Activated CD8-positive, alpha-beta T cell treated with anti-CD3 and anti-CD28 coated beads for 36 hours (primary cell): ENCODE measurements at regions of chr1 and their contacts with region 1.

Region 1: DNA sequence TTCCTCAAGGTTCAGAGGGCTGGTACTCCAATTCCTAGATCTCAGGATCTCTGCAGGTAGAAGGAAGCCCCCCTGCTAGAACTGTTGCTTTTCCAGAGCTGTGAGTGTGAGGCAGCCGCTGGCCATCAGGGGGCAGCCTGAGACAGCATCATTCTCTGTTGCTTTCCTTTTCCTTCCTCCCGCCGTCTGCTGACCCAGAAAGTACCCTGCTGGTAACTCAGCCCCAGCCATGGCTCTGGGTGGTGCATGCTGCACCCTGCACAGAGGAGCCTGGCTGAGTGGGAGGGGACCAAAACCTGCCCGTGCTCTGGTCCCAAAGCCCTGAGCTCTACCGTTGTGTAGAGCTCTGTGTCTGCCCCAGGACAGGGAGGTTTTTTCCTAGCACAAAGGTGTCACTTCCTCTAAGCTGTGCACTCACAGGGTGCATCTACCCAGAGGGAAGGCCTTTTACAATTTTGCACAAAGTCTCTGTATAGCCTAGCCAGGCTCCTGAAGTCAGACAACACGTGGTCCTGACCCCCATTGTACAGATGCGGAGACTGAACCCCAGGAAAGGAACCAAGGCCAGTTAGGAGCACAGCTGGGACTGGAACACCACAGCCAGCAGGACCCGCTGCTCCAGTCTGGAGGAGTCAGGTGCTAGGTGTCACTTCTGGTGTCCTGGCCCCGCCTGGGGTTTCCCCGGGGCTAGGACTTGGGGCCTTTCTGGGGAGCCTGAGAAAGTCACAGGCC is 5.6 kb upstream of the FAM131C start:
- DNase-seq: peak; percentile 89
- ATAC-seq: peak; percentile 90
- H3K4me3 Mint-ChIP-seq: peak overlapping the region; percentile 54
- H3K27ac Mint-ChIP-seq: peak overlapping the region; percentile 67
- H3K4me1 Mint-ChIP-seq: peaks cover 8% of the 10 kb centered on the region
- H3K27me3 Mint-ChIP-seq: peaks cover 5% of the 10 kb centered on the region
- CTCF ChIP-seq: peak; percentile 88

Region 2: DNA sequence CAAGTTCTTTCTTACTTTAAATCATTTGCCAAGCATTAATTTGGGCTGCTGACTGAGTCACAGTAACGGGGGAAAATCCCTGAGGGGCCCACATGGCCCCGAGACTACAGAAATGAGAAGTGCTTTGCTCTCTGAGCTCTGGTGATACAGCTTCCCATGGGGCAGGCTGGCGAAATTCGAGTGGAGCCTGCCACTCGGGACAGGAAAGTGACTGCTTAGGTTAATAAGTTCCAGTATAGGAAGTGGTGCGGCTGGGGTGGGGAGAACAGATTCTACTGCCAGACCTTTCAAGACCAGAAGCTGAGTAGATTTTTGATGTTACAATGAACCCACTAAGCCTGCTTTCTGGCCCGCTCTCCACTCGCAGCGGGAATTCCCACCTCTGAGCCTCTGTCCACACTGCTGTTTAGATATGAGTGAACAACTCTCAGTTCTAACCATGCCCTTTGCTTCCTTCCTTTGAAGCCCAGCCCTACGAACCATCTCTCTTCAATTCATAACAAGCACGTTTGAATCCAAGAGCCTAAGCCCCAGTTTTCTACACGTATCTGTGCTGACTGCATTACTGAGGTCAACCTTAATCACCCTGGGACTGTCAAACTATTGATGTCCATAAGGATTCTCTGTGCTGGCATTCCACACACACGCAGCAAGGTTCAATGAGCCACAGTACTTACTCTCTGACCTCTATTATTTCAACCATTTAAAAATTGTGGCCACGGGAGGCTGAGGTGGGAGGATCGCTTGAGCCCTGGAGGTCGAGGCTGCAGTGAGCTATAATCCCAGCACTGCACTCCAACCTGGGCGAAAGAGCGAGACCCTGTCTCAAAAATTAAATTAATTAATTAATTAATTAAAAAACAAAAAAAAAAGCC is 112.8 kb before region 1 on chr1:
- CTCF ChIA-PET with region 1: no interaction called
- POLR2A ChIA-PET with region 1: no interaction called
- intact Hi-C with region 1: no loop called
- DNase-seq: peak; percentile 96
- ATAC-seq: peak; percentile 75
- H3K4me3 Mint-ChIP-seq: peak overlapping the region; percentile 72
- H3K27ac Mint-ChIP-seq: peak overlapping the region; percentile 99
- H3K4me1 Mint-ChIP-seq: peaks cover 86% of the 10 kb centered on the region
- H3K27me3 Mint-ChIP-seq: no peaks in the 10 kb centered on the region
- CTCF ChIP-seq: no peak

Region 3: GRCh38 chr1:16055613-16056520 is 23.2 kb before region 1 on chr1:
- CTCF ChIA-PET with region 1: no interaction called
- POLR2A ChIA-PET with region 1: no interaction called
- intact Hi-C with region 1: no loop called
- DNase-seq: peak; percentile 96
- ATAC-seq: peak; percentile 100
- H3K4me3 Mint-ChIP-seq: no peak overlapping the region
- H3K27ac Mint-ChIP-seq: no peak overlapping the region
- H3K4me1 Mint-ChIP-seq: peaks cover 2% of the 10 kb centered on the region
- H3K27me3 Mint-ChIP-seq: no peaks in the 10 kb centered on the region
- CTCF ChIP-seq: peak; percentile 95

Region 4: GRCh38 chr1:16067127-16067768 is 11.8 kb before region 1 on chr1:
- CTCF ChIA-PET with region 1: interaction called, 26 read pairs
- POLR2A ChIA-PET with region 1: interaction called, 3 read pairs
- intact Hi-C with region 1: no loop called
- DNase-seq: peak; percentile 18
- ATAC-seq: no peak
- H3K4me3 Mint-ChIP-seq: no peak overlapping the region
- H3K27ac Mint-ChIP-seq: no peak overlapping the region
- H3K4me1 Mint-ChIP-seq: peaks cover 9% of the 10 kb centered on the region
- H3K27me3 Mint-ChIP-seq: peaks cover 7% of the 10 kb centered on the region
- CTCF ChIP-seq: no peak

Region 5: GRCh38 chr1:16109571-16109970 is 30.5 kb after region 1 on chr1:
- CTCF ChIA-PET with region 1: interaction called, 17 read pairs
- POLR2A ChIA-PET with region 1: no interaction called
- intact Hi-C with region 1: no loop called
- DNase-seq: no peak
- ATAC-seq: no peak
- H3K4me3 Mint-ChIP-seq: no peak overlapping the region
- H3K27ac Mint-ChIP-seq: no peak overlapping the region
- H3K4me1 Mint-ChIP-seq: no peaks in the 10 kb centered on the region
- H3K27me3 Mint-ChIP-seq: peaks cover 13% of the 10 kb centered on the region
- CTCF ChIP-seq: no peak

Region 6: GRCh38 chr1:16139473-16139962 is 60.4 kb after region 1 on chr1:
- CTCF ChIA-PET with region 1: interaction called, 10 read pairs
- POLR2A ChIA-PET with region 1: no interaction called
- intact Hi-C with region 1: no loop called
- DNase-seq: peak; percentile 52
- ATAC-seq: peak; percentile 42
- H3K4me3 Mint-ChIP-seq: no peak overlapping the region
- H3K27ac Mint-ChIP-seq: no peak overlapping the region
- H3K4me1 Mint-ChIP-seq: peaks cover 18% of the 10 kb centered on the region
- H3K27me3 Mint-ChIP-seq: peaks cover 2% of the 10 kb centered on the region
- CTCF ChIP-seq: no peak

Region 7: GRCh38 chr1:16181887-16182719 is 103.0 kb after region 1 on chr1:
- CTCF ChIA-PET with region 1: interaction called, 299 read pairs
- POLR2A ChIA-PET with region 1: interaction called, 5 read pairs
- intact Hi-C with region 1: no loop called
- DNase-seq: no peak
- ATAC-seq: no peak
- H3K4me3 Mint-ChIP-seq: no peak overlapping the region
- H3K27ac Mint-ChIP-seq: no peak overlapping the region
- H3K4me1 Mint-ChIP-seq: no peaks in the 10 kb centered on the region
- H3K27me3 Mint-ChIP-seq: no peaks in the 10 kb centered on the region
- CTCF ChIP-seq: no peak

Region 8: GRCh38 chr1:16217061-16217785 is 138.1 kb after region 1 on chr1:
- CTCF ChIA-PET with region 1: interaction called, 10 read pairs
- POLR2A ChIA-PET with region 1: no interaction called
- intact Hi-C with region 1: no loop called
- DNase-seq: peak; percentile 96
- ATAC-seq: peak; percentile 99
- H3K4me3 Mint-ChIP-seq: peak overlapping the region; percentile 74
- H3K27ac Mint-ChIP-seq: peak overlapping the region; percentile 31
- H3K4me1 Mint-ChIP-seq: peaks cover 17% of the 10 kb centered on the region
- H3K27me3 Mint-ChIP-seq: no peaks in the 10 kb centered on the region
- CTCF ChIP-seq: no peak

Region 9: GRCh38 chr1:16366722-16367257 is 287.7 kb after region 1 on chr1 and contains the start of gene SZRD1:
- CTCF ChIA-PET with region 1: interaction called, 16 read pairs
- POLR2A ChIA-PET with region 1: no interaction called
- intact Hi-C with region 1: loop called (anchors 10 kb)
- DNase-seq: peak; percentile 98
- ATAC-seq: peak; percentile 87
- H3K4me3 Mint-ChIP-seq: peak within 1 kb of the TSS; percentile 98
- H3K27ac Mint-ChIP-seq: peak within 1 kb of the TSS; percentile 100
- H3K4me1 Mint-ChIP-seq: peaks cover 35% of the 10 kb centered on the region
- H3K27me3 Mint-ChIP-seq: no peaks in the 10 kb centered on the region
- CTCF ChIP-seq: no peak
- total RNA-seq, gene SZRD1: 175 to 177 TPM